ENCODE measurements at regions of chr2 and their contacts with region 1.

Region 1: GRCh38 chr2:219119422-219120043 is 41.1 kb downstream of the NHEJ1 start:
- DNase-seq: no peak
- H3K4me3 ChIP-seq: no peak overlapping the region
- H3K27ac ChIP-seq: no peak overlapping the region
- H3K4me1 ChIP-seq: no peaks in the 10 kb centered on the region
- H3K27me3 ChIP-seq: no peaks in the 10 kb centered on the region
- CTCF ChIP-seq: peak; percentile 38 to 79 (median 62)

Region 2: GRCh38 chr2:218074031-218074430 is 1045.5 kb before region 1 on chr2:
- intact Hi-C with region 1: no loop called
- DNase-seq: no peak
- H3K4me3 ChIP-seq: no peak overlapping the region
- H3K27ac ChIP-seq: no peak overlapping the region
- H3K4me1 ChIP-seq: no peaks in the 10 kb centered on the region
- H3K27me3 ChIP-seq: no peaks in the 10 kb centered on the region
- CTCF ChIP-seq: peak in 2 of 3 experiments; percentile 16 to 32

Region 3: GRCh38 chr2:219057709-219058540 is 61.6 kb before region 1 on chr2:
- intact Hi-C with region 1: loop called (anchors 1 kb)
- DNase-seq: peak; percentile 18 to 74
- H3K4me3 ChIP-seq: peak overlapping the region in 1 of 2 donors; percentile 56
- H3K27ac ChIP-seq: no peak overlapping the region
- H3K4me1 ChIP-seq: peaks cover 29 to 31% of the 10 kb centered on the region in 2 donors
- H3K27me3 ChIP-seq: peaks cover 19% of the 10 kb centered on the region
- CTCF ChIP-seq: peak; percentile 89 to 94 (median 92)

Region 4: GRCh38 chr2:219073413-219074129 is 46.0 kb before region 1 on chr2:
- intact Hi-C with region 1: no loop called
- DNase-seq: no peak
- H3K4me3 ChIP-seq: no peak overlapping the region
- H3K27ac ChIP-seq: no peak overlapping the region
- H3K4me1 ChIP-seq: no peaks in the 10 kb centered on the region
- H3K27me3 ChIP-seq: no peaks in the 10 kb centered on the region
- CTCF ChIP-seq: peak in 1 of 3 experiments; percentile 46